BJ (cell line): ENCODE measurements at regions of chr4 and their contacts with region 1.

Region 1: DNA sequence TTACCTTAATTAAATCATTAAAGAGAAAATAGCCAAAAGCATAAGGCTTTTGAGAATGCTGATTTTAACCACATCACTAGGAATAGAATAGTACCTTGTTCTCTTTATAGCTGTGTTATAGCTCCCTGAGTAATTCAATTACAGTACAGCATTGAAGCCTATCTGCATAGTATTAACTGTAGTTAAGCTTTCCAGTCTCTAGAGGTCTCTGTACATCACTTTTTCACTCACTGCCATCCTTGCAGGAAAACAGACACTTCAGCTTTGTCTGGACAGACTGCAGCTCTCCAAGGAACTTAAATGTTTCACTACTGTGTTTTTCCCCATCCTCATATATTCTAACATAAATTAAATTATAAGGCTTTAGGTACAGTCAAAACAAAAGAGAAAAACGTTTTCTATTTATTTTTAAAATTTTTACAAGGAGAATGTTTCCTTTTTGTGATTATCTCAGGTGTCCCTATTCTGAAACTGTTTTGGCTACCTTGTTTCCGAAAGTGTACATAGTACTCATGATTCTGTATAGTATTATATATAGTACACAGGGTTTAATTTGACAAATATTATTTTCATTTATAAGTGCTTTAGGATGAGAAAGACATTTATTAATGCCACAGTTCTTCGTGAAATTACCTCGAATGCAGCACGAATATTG is 407.9 kb downstream of the PCDH18 start:
- DNase-seq: peak; percentile 20
- H3K4me3 ChIP-seq: peak overlapping the region; percentile 49
- H3K27me3 ChIP-seq: no peaks in the 10 kb centered on the region
- CTCF ChIP-seq: peak; percentile 69

Region 2: GRCh38 chr4:137213372-137214173 is 89.2 kb after region 1 on chr4:
- CTCF ChIA-PET with region 1: no interaction called
- POLR2A ChIA-PET with region 1: no interaction called
- DNase-seq: peak; percentile 54
- H3K4me3 ChIP-seq: no peak overlapping the region
- H3K27me3 ChIP-seq: no peaks in the 10 kb centered on the region
- CTCF ChIP-seq: no peak

Region 3: GRCh38 chr4:137531986-137532868 is 407.8 kb after region 1 on chr4 and contains the start of gene PCDH18:
- CTCF ChIA-PET with region 1: interaction called, 20 read pairs
- POLR2A ChIA-PET with region 1: no interaction called
- DNase-seq: peak; percentile 87
- H3K4me3 ChIP-seq: peak within 1 kb of the TSS; percentile 57
- H3K27me3 ChIP-seq: no peaks in the 10 kb centered on the region
- CTCF ChIP-seq: no peak
- polyA plus RNA-seq, gene PCDH18: 122 and 138 TPM in 2 replicates

Region 4: DNA sequence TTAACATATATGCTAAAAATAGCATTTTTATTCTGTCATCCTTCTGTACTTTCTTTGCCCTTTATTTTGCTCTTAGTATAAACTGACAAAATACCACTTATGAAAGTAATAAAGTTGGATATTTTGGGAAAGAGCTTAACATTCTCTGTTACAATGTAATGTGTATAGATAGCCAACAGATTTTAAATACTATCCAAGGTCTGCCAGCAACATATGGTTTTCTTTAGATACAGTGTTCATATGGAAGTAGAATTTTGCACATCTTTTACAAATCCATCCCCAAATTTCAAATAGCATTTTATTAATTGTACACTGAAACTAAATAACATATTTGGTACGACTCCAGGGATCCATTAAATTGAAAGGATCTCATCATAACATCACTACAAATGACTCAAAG is 676.5 kb after region 1 on chr4:
- CTCF ChIA-PET with region 1: no interaction called
- POLR2A ChIA-PET with region 1: interaction called, 24 read pairs
- DNase-seq: no peak
- H3K4me3 ChIP-seq: no peak overlapping the region
- H3K27me3 ChIP-seq: no peaks in the 10 kb centered on the region
- CTCF ChIP-seq: no peak

Region 5: GRCh38 chr4:137819964-137820383 is 695.6 kb after region 1 on chr4:
- CTCF ChIA-PET with region 1: interaction called, 11 read pairs
- POLR2A ChIA-PET with region 1: no interaction called
- DNase-seq: no peak
- H3K4me3 ChIP-seq: no peak overlapping the region
- H3K27me3 ChIP-seq: no peaks in the 10 kb centered on the region
- CTCF ChIP-seq: peak; percentile 71